Body of pancreas (tissue), 4 donors: ENCODE measurements at regions of chr7 and their contacts with region 1.

Region 1: DNA sequence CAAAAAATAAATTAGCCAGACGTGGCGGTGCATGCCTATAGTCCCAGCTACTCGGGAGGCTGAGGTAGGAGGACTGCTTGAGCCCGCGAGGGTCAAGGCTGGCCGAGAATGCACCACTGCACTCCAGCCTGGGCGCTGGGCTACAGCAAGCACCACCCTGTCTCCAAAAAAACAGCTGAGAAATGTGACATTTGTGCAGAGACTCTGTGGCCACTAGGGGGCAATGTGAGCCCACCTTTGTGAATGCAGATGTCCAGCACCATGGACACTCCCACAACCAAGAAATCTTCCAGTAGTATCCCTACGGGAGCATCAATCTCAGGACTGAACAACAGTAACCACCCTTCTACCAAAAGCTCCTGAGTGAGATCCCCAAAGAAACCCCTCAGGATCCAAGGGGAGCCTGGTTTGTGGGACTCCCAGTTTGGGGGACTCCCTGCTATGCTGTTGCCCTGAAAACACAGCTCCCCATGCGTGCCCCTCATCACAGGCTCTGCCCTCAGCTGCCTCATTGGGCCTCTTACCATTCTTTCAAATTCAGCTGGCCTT is 6.2 kb upstream of the AHCYL2 start:
- DNase-seq: peak; percentile 87 to 92 (median 90)
- ATAC-seq: peak; percentile 89
- H3K4me3 ChIP-seq: no peak overlapping the region
- H3K27ac ChIP-seq: no peak overlapping the region
- H3K4me1 ChIP-seq: peaks cover under 1% of the 10 kb centered on the region
- H3K27me3 ChIP-seq: no peaks in the 10 kb centered on the region
- CTCF ChIP-seq: peak; percentile 77 to 95 (median 91)
- POLR2A ChIP-seq: no peak

Region 2: DNA sequence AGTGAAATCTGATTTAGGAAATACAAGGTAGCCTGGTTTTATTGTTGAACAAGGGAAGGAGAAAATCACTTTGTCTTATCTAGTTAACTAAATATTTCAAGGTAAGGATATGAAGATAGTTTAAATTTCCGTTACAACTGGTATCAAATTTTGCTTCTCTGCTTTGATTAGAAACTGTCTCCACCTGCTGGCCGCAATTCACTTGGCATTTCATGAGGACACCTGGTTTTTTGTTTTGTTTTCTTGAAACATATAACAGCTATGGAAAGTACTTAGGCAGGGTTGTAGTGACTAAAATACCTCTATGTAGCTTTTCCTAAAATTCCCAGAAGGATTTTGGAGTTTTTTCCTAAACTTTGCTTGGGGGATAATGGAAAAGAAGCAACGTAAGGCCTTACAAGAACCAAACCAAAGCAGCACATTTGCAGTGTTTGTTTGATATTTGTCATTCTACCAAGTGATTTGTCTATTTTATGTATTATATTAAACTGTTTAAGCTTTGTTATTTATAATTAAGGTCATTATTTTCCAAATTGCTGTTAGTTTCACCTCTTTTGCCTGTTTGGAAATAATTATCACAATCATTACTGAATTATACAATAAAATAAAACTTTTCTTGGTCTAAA is 79.8 kb after region 1 on chr7:
- intact Hi-C with region 1: loop called (anchors 5 kb)
- DNase-seq: peak; percentile 47 to 76 (median 65)
- ATAC-seq: peak; percentile 48
- H3K4me3 ChIP-seq: no peak overlapping the region
- H3K27ac ChIP-seq: no peak overlapping the region
- H3K4me1 ChIP-seq: peaks cover 18% of the 10 kb centered on the region
- H3K27me3 ChIP-seq: no peaks in the 10 kb centered on the region
- CTCF ChIP-seq: peak in 6 of 7 experiments; percentile 60 to 72 (median 66)
- POLR2A ChIP-seq: no peak

Region 3: DNA sequence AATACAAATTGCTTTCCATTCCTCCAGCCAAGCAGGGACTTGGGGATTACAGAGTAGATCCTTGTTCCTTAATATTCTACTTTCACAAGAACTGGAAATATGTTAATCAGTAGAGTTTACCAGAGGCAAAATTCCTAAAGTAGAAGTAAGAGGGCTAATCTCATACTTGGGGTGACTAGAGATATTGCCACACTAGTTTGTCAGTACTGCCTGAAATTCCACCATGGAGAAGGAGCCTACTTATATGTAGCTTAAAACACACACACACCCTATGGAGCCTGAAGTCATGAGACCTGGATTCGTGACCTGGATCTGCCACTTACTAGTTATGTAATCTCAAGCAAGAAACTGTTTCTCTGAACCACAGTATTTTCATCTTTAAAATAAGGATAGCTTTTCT is 249.5 kb after region 1 on chr7:
- intact Hi-C with region 1: loop called (anchors 10 kb)
- DNase-seq: no peak
- ATAC-seq: no peak
- H3K4me3 ChIP-seq: no peak overlapping the region
- H3K27ac ChIP-seq: no peak overlapping the region
- H3K4me1 ChIP-seq: no peaks in the 10 kb centered on the region
- H3K27me3 ChIP-seq: no peaks in the 10 kb centered on the region
- CTCF ChIP-seq: no peak
- POLR2A ChIP-seq: no peak